Caco-2 (cell line): ENCODE measurements at regions of chr5 and their contacts with region 1.

Region 1: DNA sequence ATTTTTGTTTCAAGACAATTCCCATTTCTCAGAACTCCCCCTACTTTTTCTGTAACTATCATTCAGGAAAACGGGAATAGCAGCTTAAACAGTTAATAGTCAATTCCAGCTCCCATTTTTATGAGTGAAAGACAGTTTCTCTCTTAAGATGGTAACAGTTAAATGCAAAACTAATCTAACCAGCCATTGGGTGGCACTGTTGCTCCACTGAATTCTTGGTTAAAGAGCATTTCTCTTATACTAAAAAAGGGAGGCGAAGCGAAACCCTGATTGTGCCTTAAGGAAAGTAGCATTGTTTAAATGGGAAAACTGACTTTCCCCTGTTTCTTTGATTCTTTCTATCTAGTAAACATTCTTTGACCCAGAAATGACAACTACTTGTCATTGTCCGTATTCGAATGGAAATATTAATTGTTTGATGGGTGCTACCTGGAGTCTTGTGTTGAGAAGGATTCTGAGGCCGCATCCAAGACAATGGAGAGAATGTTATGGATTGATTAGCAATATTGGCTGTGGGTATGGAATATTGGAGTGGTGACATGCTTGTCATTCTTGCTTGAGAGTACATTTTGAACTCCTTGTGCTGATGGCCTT is 507.8 kb downstream of the MAT2B start:
- DNase-seq: peak; percentile 57 to 68
- H3K4me3 ChIP-seq: no peak overlapping the region
- H3K4me3 Mint-ChIP-seq: no peak overlapping the region
- H3K27ac Mint-ChIP-seq: no peak overlapping the region
- H3K4me1 ChIP-seq: no peaks in the 10 kb centered on the region
- H3K4me1 Mint-ChIP-seq: no peaks in the 10 kb centered on the region
- H3K27me3 ChIP-seq: no peaks in the 10 kb centered on the region
- H3K27me3 Mint-ChIP-seq: peaks cover 3% of the 10 kb centered on the region
- CTCF ChIP-seq: peak; percentile 63 to 69

Region 2: DNA sequence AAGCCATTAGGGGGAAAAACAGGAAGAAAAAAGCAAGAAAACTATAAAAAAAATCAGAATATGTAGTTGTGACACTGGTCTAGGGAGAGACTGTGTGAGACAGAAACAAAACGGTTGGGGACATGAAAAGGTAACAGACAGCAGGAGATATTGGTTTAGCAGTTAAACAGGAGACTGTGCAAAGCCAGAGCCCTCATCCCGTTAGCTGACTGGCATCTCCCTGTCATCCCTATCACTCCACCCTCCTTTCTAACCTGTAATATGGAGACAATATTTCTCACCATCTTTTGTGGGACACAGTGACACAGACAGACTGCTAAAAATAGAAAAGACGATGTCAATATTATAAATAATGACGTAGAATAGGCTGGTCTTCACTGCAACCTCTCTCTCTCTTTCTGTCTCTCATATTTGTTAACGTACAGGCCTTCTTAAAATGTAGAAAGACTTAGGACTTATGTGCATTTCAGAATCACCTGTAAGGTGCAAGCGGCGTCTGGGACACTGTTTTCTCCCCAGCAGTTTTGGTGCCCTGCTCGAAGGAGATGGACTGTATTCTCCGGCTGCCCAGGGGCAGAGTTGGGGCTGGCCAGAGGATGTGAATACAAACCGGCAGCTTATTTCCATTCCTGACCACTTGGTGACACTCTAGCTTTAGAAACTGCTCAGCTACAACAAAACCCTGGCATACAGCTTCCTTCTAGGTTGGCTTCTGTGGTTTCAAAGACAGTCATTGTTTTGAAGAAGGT is 317.2 kb before region 1 on chr5:
- CTCF ChIA-PET with region 1: no interaction called
- POLR2A ChIA-PET with region 1: no interaction called
- intact Hi-C with region 1: loop called (anchors 2 kb)
- DNase-seq: peak; percentile 38 to 52
- H3K4me3 ChIP-seq: no peak overlapping the region
- H3K4me3 Mint-ChIP-seq: no peak overlapping the region
- H3K27ac Mint-ChIP-seq: no peak overlapping the region
- H3K4me1 ChIP-seq: no peaks in the 10 kb centered on the region
- H3K4me1 Mint-ChIP-seq: no peaks in the 10 kb centered on the region
- H3K27me3 ChIP-seq: no peaks in the 10 kb centered on the region
- H3K27me3 Mint-ChIP-seq: peaks cover 5% of the 10 kb centered on the region
- CTCF ChIP-seq: peak in 1 of 2 experiments; percentile 66

Region 3: GRCh38 chr5:164041105-164041504 is 27.9 kb after region 1 on chr5:
- CTCF ChIA-PET with region 1: no interaction called
- POLR2A ChIA-PET with region 1: no interaction called
- intact Hi-C with region 1: no loop called
- DNase-seq: no peak
- H3K4me3 ChIP-seq: no peak overlapping the region
- H3K4me3 Mint-ChIP-seq: no peak overlapping the region
- H3K27ac Mint-ChIP-seq: no peak overlapping the region
- H3K4me1 ChIP-seq: no peaks in the 10 kb centered on the region
- H3K4me1 Mint-ChIP-seq: no peaks in the 10 kb centered on the region
- H3K27me3 ChIP-seq: no peaks in the 10 kb centered on the region
- H3K27me3 Mint-ChIP-seq: no peaks in the 10 kb centered on the region
- CTCF ChIP-seq: no peak

Region 4: DNA sequence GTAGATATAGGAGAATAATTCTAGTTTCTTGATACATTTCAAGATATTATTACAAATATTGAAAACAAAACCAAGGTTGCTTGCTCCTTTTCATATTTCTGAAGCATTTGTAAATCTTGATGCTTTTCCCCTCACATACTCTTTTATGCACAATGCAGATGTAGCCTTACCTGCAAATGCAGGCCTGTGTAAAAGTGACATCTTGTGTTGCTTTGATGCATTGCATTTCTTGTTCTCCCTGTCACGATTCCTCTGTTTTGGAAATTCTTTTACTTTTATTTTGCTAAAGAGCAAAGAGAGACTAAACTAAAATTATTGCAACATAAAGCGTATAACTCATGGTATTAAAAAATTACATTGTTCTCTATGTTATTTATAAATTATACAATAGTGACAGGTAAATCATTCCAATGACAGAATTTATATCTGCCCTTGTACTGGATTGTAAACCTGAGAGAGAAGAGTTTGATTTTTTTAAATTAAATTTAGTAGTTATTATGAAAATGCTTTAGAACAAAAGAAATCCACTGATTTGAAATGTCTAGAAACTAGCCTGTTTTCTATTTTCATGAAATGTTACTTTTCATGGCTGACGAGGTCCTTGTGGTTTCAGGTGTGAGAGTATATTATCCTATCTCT is 462.3 kb after region 1 on chr5:
- CTCF ChIA-PET with region 1: interaction called, 3 read pairs
- POLR2A ChIA-PET with region 1: no interaction called
- intact Hi-C with region 1: loop called (anchors 1 kb)
- DNase-seq: peak in 1 of 2 experiments; percentile 19
- H3K4me3 ChIP-seq: no peak overlapping the region
- H3K4me3 Mint-ChIP-seq: no peak overlapping the region
- H3K27ac Mint-ChIP-seq: no peak overlapping the region
- H3K4me1 ChIP-seq: no peaks in the 10 kb centered on the region
- H3K4me1 Mint-ChIP-seq: no peaks in the 10 kb centered on the region
- H3K27me3 ChIP-seq: no peaks in the 10 kb centered on the region
- H3K27me3 Mint-ChIP-seq: peaks cover 4% of the 10 kb centered on the region
- CTCF ChIP-seq: peak; percentile 40 to 56

Region 5: DNA sequence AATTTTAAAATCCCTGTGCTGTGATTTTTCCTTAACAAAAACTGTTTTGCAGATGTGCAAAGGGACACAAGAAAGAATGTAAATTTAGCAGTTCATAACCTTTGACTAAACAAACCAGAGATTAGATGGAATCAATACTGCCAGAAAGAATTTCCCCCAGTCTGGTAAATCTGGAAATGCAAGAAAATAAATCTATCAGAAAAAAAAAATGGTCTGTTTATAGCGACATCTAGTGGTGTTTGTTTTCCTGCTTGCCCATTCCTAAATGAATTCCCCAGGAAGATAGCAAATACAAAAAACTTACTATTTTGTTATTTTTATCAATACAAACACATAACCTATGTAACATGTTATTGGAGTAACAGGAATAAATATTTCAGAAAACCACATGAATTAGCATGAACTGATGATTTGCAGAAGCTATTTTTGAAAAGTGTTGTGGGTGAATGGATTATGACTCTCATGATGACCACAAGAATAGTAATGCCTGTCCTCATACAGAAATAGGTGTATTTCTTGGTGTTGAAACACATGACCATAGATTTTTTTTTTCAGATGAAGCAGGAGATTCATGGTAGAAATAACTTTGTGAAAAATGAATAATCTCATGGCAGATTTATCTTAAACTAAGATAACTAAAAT is 1196.0 kb after region 1 on chr5:
- CTCF ChIA-PET with region 1: no interaction called
- POLR2A ChIA-PET with region 1: no interaction called
- intact Hi-C with region 1: loop called (anchors 2 kb)
- DNase-seq: peak in 1 of 2 experiments; percentile 41
- H3K4me3 ChIP-seq: no peak overlapping the region
- H3K4me3 Mint-ChIP-seq: no peak overlapping the region
- H3K27ac Mint-ChIP-seq: no peak overlapping the region
- H3K4me1 ChIP-seq: peaks cover 5% of the 10 kb centered on the region; the same call in 1 of the 2 replicates
- H3K4me1 Mint-ChIP-seq: no peaks in the 10 kb centered on the region
- H3K27me3 ChIP-seq: no peaks in the 10 kb centered on the region
- H3K27me3 Mint-ChIP-seq: no peaks in the 10 kb centered on the region
- CTCF ChIP-seq: peak; percentile 27 to 61